Esophagus squamous epithelium (tissue), 5 donors: ENCODE measurements at regions of chr13 and their contacts with region 1.

Region 1: DNA sequence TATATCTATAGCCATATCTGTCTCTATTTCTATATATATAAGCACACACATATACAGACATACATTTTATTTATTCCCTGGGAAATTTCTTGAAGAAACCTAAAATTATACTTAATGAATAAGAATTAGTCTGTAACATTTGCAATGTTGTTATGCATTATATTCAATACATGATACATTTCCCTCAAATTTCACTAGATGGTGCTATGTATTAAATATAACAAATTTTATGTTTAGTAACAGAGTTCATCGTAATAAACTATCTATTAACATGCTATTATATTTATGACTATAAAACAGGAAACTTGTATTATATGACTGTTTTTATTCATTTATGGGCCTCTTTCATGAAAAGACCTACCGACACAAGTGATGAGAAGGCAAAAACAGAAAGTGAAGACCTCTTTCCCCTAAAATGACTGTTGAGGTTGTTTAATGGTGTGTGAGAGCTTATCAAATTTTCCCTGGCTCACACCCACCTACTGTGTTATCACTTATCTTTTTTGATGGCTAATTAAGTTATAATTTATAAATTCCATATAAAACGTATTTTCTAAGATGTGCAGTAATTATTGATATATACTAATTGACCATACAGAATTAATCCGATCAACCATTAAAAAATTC is 881.9 kb downstream of the SLITRK6 start:
- DNase-seq: no peak
- H3K4me3 ChIP-seq: no peak overlapping the region
- H3K27ac ChIP-seq: no peak overlapping the region
- H3K4me1 ChIP-seq: no peaks in the 10 kb centered on the region
- H3K27me3 ChIP-seq: no peaks in the 10 kb centered on the region
- CTCF ChIP-seq: peak in 3 of 6 experiments; percentile 19 to 50 (median 38)
- POLR2A ChIP-seq: no peak

Region 2: DNA sequence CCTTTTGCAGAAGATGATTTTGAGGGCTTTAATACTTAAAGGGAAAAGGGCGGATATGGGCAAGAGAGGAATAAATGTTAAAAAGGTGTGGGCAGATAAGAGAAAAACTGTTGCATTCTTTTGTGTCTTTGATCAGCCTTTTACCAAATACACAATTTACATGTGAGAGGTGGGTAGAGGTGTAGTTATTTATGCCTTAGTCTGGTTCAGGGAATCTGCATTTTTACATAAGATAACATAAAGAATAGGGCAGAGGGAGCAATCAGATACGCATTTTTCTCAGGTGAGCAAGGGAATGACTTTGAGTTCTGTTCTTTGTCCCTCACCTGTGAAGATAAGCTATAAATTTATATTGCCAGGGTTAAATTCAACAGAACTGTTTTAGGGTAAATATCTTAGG is 326.7 kb before region 1 on chr13:
- intact Hi-C with region 1: no loop called
- DNase-seq: no peak
- H3K4me3 ChIP-seq: no peak overlapping the region
- H3K27ac ChIP-seq: no peak overlapping the region
- H3K4me1 ChIP-seq: no peaks in the 10 kb centered on the region
- H3K27me3 ChIP-seq: no peaks in the 10 kb centered on the region
- CTCF ChIP-seq: no peak
- POLR2A ChIP-seq: no peak

Region 3: GRCh38 chr13:85806553-85807175 is 889.3 kb after region 1 on chr13:
- intact Hi-C with region 1: loop called (anchors 5 kb)
- DNase-seq: no peak
- H3K4me3 ChIP-seq: no peak overlapping the region
- H3K27ac ChIP-seq: no peak overlapping the region
- H3K4me1 ChIP-seq: peaks cover 0 to 14% (median 0%) of the 10 kb centered on the region in 3 donors
- H3K27me3 ChIP-seq: no peaks in the 10 kb centered on the region
- CTCF ChIP-seq: peak; percentile 47 to 70 (median 60)
- POLR2A ChIP-seq: no peak